A673 (cell line): ENCODE measurements at regions of chr16 and their contacts with region 1.

Region 1: GRCh38 chr16:25289466-25289865 is 31.8 kb upstream of the ZKSCAN2 start:
- DNase-seq: peak; percentile 78
- H3K4me3 ChIP-seq: no peak overlapping the region
- H3K27ac ChIP-seq: peak overlapping the region; percentile 73
- H3K4me1 ChIP-seq: peaks cover 13% of the 10 kb centered on the region
- H3K27me3 ChIP-seq: no peaks in the 10 kb centered on the region
- CTCF ChIP-seq: no peak

Region 2: DNA sequence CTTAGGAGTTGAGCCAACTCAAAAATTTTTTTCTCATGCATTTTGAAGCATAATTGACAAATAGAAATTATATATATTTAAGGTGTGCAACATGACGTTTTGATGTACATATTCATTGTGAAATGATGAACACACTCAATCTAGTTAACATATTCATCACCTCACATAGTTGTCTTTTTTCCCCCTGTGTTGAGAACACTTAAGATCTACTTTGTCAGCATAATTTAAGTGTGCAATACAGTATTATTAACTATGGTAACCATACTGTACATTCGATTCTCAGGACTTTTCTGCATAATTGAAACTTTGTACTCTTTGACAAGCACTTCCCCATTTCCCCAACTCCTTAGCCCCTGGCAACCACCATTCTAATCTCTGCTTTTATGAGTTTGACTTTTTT is 160.3 kb after region 1 on chr16:
- CTCF ChIA-PET with region 1: no interaction called
- POLR2A ChIA-PET with region 1: no interaction called
- intact Hi-C with region 1: loop called (anchors 10 kb)
- DNase-seq: no peak
- H3K4me3 ChIP-seq: no peak overlapping the region
- H3K27ac ChIP-seq: no peak overlapping the region
- H3K4me1 ChIP-seq: no peaks in the 10 kb centered on the region
- H3K27me3 ChIP-seq: no peaks in the 10 kb centered on the region
- CTCF ChIP-seq: no peak

Region 3: GRCh38 chr16:25553711-25554436 is 264.4 kb after region 1 on chr16:
- CTCF ChIA-PET with region 1: no interaction called
- POLR2A ChIA-PET with region 1: no interaction called
- intact Hi-C with region 1: no loop called
- DNase-seq: peak; percentile 12
- H3K4me3 ChIP-seq: no peak overlapping the region
- H3K27ac ChIP-seq: peak overlapping the region; percentile 27
- H3K4me1 ChIP-seq: no peaks in the 10 kb centered on the region
- H3K27me3 ChIP-seq: no peaks in the 10 kb centered on the region
- CTCF ChIP-seq: no peak